ENCODE measurements at regions of chr6 and their contacts with region 1.

Region 1: GRCh38 chr6:73129653-73130443 is 95.4 kb downstream of the KHDC1L start:
- DNase-seq: peak; percentile 80
- ATAC-seq: peak; percentile 100
- H3K4me3 ChIP-seq: peak overlapping the region; percentile 14 to 40; a peak in 3 of 4 replicates
- H3K27ac ChIP-seq: no peak overlapping the region
- H3K4me1 ChIP-seq: peaks cover 7% of the 10 kb centered on the region; the same call in 1 of the 2 replicates
- H3K27me3 ChIP-seq: no peaks in the 10 kb centered on the region
- CTCF ChIP-seq: peak; percentile 100

Region 2: GRCh38 chr6:72616406-72617015 is 513.3 kb before region 1 on chr6:
- CTCF ChIA-PET with region 1: interaction called, 10 read pairs
- POLR2A ChIA-PET with region 1: no interaction called
- in situ Hi-C with region 1: no loop called
- intact Hi-C with region 1: loop called (anchors 2 kb)
- DNase-seq: no peak
- ATAC-seq: no peak
- H3K4me3 ChIP-seq: no peak overlapping the region
- H3K27ac ChIP-seq: no peak overlapping the region
- H3K4me1 ChIP-seq: peaks cover 9% of the 10 kb centered on the region
- H3K27me3 ChIP-seq: no peaks in the 10 kb centered on the region; the same call in 1 of the 2 replicates
- CTCF ChIP-seq: peak; percentile 76; the same call in 1 of the 2 replicates

Region 3: DNA sequence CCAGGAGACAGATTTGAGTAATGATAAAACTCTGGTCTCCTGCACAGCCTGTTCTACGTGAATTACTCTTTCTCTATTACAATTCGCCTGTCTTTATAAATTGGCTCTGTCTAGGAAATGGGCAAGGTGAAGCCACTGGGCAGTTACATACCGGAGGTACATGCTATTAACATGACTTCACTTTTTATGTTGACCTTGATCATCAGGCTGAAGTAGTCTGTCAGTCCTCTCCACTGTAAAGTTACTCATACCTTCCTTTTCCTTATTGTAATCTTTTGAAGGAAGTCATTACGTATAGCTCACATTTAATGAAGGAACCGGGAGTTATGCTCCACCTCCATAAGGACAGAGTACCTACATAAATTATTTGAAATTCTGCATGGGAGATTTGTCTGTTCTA is 153.0 kb after region 1 on chr6:
- CTCF ChIA-PET with region 1: no interaction called
- POLR2A ChIA-PET with region 1: no interaction called
- in situ Hi-C with region 1: no loop called
- intact Hi-C with region 1: no loop called
- DNase-seq: no peak
- ATAC-seq: no peak
- H3K4me3 ChIP-seq: no peak overlapping the region
- H3K27ac ChIP-seq: no peak overlapping the region
- H3K4me1 ChIP-seq: no peaks in the 10 kb centered on the region
- H3K27me3 ChIP-seq: no peaks in the 10 kb centered on the region
- CTCF ChIP-seq: no peak

Region 4: DNA sequence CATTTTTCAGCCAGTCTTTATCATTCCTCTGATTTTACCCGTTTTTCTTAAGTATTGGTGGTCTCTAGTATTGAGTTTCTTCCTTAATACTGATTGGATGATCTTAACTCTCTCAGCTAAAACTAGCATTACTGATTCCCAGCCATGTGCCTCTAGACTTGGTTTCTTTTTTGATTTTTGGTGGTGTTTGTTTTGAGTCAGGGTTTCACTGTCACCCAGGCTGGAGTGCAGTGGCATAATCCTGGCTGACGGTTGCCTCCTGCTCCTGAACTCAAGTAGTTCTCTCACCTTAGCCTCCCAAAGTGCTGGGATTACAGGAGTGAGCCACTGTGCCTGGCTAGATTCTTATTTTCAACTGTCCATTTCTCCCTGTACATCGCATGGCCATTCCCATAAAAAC is 199.4 kb after region 1 on chr6:
- CTCF ChIA-PET with region 1: no interaction called
- POLR2A ChIA-PET with region 1: no interaction called
- in situ Hi-C with region 1: no loop called
- intact Hi-C with region 1: loop called (anchors 5 kb)
- DNase-seq: no peak
- ATAC-seq: no peak
- H3K4me3 ChIP-seq: no peak overlapping the region
- H3K27ac ChIP-seq: no peak overlapping the region
- H3K4me1 ChIP-seq: no peaks in the 10 kb centered on the region
- H3K27me3 ChIP-seq: no peaks in the 10 kb centered on the region
- CTCF ChIP-seq: no peak

Measured in Panc1 (cell line).